HEK293 (cell line): ENCODE measurements at regions of chr6 and their contacts with region 1.

Region 1: GRCh38 chr6:127690092-127690491 is 113.1 kb downstream of the C6orf58 start:
- H3K4me3 ChIP-seq: no peak overlapping the region
- H3K27ac ChIP-seq: no peak overlapping the region
- H3K4me1 ChIP-seq: no peaks in the 10 kb centered on the region
- CTCF ChIP-seq: 0 out of 2 replicates have a peak, but pooled peaks have one; percentile 31

Region 2: DNA sequence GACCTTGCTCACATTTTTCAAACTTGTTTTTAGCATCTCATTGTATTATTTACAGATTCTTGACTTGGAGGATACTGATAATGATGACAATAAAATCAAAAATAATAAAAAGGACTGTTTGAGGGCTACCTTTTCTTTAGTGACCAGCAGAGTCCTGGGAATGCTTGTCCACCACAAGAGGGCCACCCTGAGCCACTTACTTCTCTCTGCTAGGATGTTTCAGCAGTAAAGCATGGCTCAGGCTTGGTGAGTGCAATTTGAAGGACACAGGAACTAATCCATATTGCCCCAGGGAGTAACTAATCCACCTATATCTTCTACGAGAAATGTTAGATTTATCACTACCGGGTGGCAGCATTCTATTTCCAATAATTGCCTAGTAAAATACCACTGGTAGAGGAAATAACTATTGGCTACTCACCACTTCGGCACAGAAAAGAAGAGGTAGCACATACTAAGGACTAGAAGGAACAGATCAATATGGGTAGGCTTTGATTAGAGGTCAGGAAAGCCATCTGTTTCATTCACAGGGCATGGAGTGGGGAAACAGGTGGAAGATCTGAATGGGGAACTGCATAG is 225.1 kb before region 1 on chr6:
- CTCF ChIA-PET with region 1: interaction called, 12 read pairs
- POLR2A ChIA-PET with region 1: no interaction called
- H3K4me3 ChIP-seq: no peak overlapping the region
- H3K27ac ChIP-seq: no peak overlapping the region
- H3K4me1 ChIP-seq: peaks cover 3% of the 10 kb centered on the region; the same call in 1 of the 2 replicates
- CTCF ChIP-seq: peak; percentile 59; the same call in 1 of the 2 replicates

Region 3: GRCh38 chr6:127606131-127606562 is 83.9 kb before region 1 on chr6:
- CTCF ChIA-PET with region 1: interaction called, 19 read pairs
- POLR2A ChIA-PET with region 1: no interaction called
- H3K4me3 ChIP-seq: no peak overlapping the region
- H3K27ac ChIP-seq: no peak overlapping the region
- H3K4me1 ChIP-seq: no peaks in the 10 kb centered on the region
- CTCF ChIP-seq: peak; percentile 38; the same call in 1 of the 2 replicates

Region 4: DNA sequence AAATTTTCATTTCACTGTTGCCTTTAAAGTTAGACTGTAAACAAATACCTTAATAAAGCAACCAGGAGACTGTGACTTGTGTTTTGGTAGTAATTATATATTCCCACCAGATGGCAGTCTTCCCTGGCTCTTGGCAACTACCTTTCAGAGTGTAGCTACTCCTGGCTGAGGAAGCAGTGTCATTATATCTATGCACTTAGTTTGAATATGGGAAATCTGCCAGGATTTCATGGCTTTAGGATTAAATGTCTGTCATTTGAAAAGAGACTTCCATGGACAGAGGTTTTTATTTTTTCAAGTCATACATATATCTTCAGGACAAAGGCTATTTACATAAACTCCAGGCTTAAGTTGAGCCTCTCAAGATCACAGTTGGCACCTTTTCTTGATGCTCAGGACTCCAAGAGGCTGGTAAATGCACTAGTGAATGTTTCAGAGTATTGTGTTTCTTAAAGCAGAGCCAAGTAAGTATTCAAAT is 47.0 kb after region 1 on chr6:
- CTCF ChIA-PET with region 1: no interaction called
- POLR2A ChIA-PET with region 1: no interaction called
- H3K4me3 ChIP-seq: no peak overlapping the region
- H3K27ac ChIP-seq: no peak overlapping the region
- H3K4me1 ChIP-seq: peaks cover 3% of the 10 kb centered on the region; the same call in 1 of the 2 replicates
- CTCF ChIP-seq: peak; percentile 50; the same call in 1 of the 2 replicates